Left cardiac atrium (tissue), 4 donors: ENCODE measurements at regions of chr17 and their contacts with region 1.

Region 1: DNA sequence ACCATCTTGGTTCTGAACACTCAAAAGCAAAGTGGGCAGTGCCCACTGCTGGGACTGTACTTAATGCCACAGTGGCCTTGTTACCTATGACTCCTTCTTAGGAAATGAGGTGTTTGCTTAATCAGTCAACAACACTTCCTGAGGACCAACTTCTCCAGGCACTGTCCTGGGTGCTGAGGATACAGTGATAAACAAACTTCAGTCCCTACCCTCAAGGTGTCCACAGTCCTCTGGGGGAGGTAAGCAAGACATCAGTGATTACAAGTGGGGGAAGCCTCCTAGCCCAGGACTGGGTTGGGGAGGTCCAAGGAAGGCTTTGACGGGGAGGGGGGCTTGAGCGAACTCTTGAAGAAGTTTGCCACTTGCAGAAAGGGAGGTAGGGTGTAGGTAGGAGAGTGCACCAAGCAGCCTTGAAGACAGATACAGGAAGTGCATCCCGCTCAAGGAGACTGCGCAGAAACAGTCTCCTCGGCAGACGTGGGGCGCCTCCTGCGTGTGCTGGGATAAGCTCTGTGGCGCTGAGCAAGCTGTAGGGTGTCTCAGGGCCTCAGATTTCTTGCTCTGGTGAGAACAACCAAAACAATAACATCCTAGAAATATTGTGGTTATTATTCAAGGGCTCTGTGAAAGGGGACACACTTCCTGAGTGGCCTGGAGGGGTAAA is 2.6 kb upstream of the ABCC3 start:
- DNase-seq: no peak
- ATAC-seq: no peak

Region 2: GRCh38 chr17:50681263-50682210 is 49.5 kb after region 1 on chr17:
- intact Hi-C with region 1: loop called (anchors 2 to 5 kb)
- DNase-seq: peak; percentile 58
- ATAC-seq: peak; percentile 75 to 79

Region 3: DNA sequence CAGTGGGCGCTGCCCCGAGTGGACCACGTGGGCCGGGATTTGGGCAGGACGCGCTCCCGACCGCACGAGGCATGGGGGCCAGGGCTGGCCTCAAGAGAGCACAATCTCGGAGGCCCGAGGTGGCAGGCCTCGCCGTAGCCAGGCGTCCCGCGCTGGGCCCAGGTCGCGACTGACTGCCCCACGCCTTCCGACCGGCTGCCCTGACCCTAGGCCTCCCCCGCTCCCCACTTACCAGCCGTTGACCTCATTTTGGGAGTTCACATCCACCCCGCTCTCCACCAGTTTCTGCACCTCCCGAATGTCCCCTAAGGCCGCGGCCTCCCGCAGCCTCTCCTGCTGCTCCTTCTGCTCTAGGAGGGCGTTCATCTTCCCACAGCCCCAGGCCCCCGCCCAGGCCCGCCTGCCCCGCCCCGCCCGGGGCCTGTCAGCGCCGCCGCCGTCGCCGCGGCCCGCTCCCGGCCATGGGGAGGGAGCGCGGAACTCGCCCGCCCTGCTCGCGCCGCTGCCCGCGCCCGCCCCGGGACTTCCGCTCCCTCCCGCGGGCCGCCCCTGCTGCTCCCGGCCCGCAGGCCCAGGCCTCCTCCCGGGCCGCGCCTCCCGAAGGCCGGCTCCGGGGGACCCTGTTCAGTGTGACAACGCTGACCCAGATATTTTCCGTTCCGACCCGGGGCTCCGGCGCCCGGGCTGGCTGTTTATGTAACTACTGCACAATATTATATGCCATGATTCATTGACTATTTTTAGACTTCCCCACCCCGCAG is 75.4 kb after region 1 on chr17 and contains the start of gene ANKRD40:
- intact Hi-C with region 1: no loop called
- DNase-seq: peak; percentile 89
- ATAC-seq: peak; percentile 88 to 89
- total RNA-seq, gene ANKRD40: 43.8 to 45.4 TPM

Region 4: DNA sequence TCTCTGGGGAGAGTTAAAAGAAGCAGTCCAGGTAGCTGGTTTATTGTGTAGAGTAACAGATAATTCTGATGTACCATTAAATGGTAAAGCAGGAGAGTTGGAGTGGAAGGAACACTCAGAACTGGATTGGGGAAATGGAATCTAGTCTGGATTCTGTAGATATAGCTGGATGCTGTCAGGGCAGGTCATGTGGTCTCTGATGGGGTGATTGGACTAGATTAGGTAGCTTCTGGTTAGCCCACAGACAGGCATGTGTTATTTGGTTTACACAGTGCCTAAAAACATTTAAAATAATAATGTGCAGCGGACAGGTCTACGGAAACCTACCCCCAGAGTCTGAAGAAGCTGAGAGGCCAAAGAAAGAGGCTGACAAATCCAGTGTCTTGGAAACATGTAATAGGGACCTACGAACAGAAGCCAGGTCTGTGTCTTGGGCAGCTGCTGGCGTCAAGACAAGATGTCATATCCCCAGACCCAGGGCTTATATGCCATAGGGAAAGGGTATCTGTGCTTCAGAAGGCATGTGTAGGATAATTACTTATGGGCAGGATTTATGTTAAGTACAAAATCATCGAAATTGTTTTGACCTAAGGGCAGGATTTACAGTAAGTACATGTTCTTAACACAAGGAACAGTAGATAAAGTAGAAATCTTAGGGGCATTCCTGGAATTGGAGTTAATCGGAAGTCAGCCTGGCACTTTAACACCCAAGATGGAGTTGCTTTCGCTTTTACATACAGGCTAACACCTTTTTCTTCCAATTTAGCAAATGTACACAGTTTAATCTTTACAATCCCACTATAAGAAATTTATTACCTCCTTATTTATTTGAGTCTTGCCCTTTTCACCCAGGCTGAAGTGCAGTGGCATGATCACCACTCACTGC is 99.8 kb after region 1 on chr17:
- intact Hi-C with region 1: no loop called
- DNase-seq: no peak
- ATAC-seq: peak in 1 of 2 donors; percentile 11